ENCODE measurements at regions of chr13 and their contacts with region 1.

Region 1: GRCh38 chr13:110819203-110820014 is 95.5 kb downstream of the ANKRD10 start:
- DNase-seq: peak; percentile 88
- H3K4me3 Mint-ChIP-seq: no peak overlapping the region
- H3K27ac Mint-ChIP-seq: no peak overlapping the region
- H3K4me1 Mint-ChIP-seq: peaks cover 6% of the 10 kb centered on the region
- H3K27me3 Mint-ChIP-seq: no peaks in the 10 kb centered on the region

Region 2: GRCh38 chr13:110218581-110219201 is 600.7 kb before region 1 on chr13:
- CTCF ChIA-PET with region 1: no interaction called
- intact Hi-C with region 1: loop called (anchors 5 kb)
- DNase-seq: no peak
- H3K4me3 Mint-ChIP-seq: no peak overlapping the region
- H3K27ac Mint-ChIP-seq: no peak overlapping the region
- H3K4me1 Mint-ChIP-seq: no peaks in the 10 kb centered on the region
- H3K27me3 Mint-ChIP-seq: peaks cover 16% of the 10 kb centered on the region

Region 3: DNA sequence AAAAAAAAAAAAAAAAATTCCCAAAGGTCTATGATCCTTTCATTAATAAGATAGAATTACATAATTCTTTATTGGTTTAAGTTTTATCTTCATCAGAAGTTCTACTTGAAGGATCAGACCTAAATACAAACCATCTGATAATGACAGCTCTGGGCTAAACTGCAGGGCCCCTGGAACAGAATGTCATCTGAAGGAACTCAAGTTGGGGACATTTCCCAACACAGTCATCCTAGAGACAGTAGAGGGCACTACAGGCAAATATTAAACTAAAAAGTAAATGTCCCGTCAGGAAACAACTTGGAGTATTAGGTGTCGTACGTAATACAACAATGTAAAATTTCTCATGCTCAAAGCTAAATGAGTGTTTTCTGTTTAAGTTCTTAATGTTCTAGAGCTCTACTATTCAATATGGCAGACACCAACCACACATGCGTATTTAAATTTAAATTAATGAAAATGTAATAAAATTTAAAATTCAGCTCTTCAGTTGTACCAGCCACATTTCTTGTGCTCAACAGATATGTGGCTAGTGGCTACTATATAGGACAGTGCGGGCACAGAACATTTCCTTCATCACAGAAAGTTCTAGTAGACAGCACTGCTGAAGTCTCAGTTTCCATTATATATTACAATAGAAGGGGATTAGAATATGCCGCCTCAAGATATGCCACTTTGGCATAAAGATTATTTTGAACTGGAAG is 225.8 kb before region 1 on chr13:
- CTCF ChIA-PET with region 1: interaction called, 10 read pairs
- intact Hi-C with region 1: loop called (anchors 1 kb)
- DNase-seq: peak; percentile 21
- H3K4me3 Mint-ChIP-seq: no peak overlapping the region
- H3K27ac Mint-ChIP-seq: no peak overlapping the region
- H3K4me1 Mint-ChIP-seq: peaks cover 3% of the 10 kb centered on the region
- H3K27me3 Mint-ChIP-seq: no peaks in the 10 kb centered on the region

Region 4: GRCh38 chr13:110644892-110645521 is 174.4 kb before region 1 on chr13:
- CTCF ChIA-PET with region 1: interaction called, 6 read pairs
- intact Hi-C with region 1: loop called (anchors 1 kb)
- DNase-seq: peak; percentile 63
- H3K4me3 Mint-ChIP-seq: no peak overlapping the region
- H3K27ac Mint-ChIP-seq: no peak overlapping the region
- H3K4me1 Mint-ChIP-seq: no peaks in the 10 kb centered on the region
- H3K27me3 Mint-ChIP-seq: no peaks in the 10 kb centered on the region

Region 5: GRCh38 chr13:110680851-110681250 is 138.6 kb before region 1 on chr13:
- CTCF ChIA-PET with region 1: interaction called, 15 read pairs
- intact Hi-C with region 1: loop called (anchors 1 kb)
- DNase-seq: peak; percentile 8
- H3K4me3 Mint-ChIP-seq: no peak overlapping the region
- H3K27ac Mint-ChIP-seq: no peak overlapping the region
- H3K4me1 Mint-ChIP-seq: no peaks in the 10 kb centered on the region
- H3K27me3 Mint-ChIP-seq: no peaks in the 10 kb centered on the region

Region 6: GRCh38 chr13:110705826-110706569 is 113.4 kb before region 1 on chr13 and contains the start of gene CARS2:
- CTCF ChIA-PET with region 1: no interaction called
- intact Hi-C with region 1: loop called (anchors 1 kb)
- DNase-seq: peak; percentile 95
- H3K4me3 Mint-ChIP-seq: peak within 1 kb of the TSS; percentile 93
- H3K27ac Mint-ChIP-seq: peak within 1 kb of the TSS; percentile 87
- H3K4me1 Mint-ChIP-seq: peaks cover 42% of the 10 kb centered on the region
- H3K27me3 Mint-ChIP-seq: no peaks in the 10 kb centered on the region
- total RNA-seq, gene CARS2: 42.4 to 44.2 TPM